Caco-2 (cell line): ENCODE measurements at regions of chr11 and their contacts with region 1.

Region 1: DNA sequence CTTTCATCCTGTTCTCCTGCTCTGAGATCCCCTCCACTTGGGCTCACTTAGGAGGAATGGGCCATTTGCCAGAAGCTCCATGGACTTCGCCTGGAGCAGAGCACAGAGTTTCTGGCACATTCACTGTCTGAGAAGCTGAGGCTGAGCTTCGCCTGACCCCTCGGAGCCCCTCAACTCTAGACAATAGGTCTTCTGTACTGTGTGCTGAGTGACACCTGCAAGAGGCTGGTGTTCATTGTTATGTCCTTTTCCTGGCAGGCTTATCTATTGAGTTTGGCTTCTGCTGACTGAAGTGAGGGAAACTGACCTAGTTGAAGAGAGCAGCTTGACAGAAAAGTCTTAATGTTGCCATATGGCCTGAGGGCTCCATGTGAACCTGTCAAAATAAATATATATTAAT is 124.3 kb downstream of the EHF start:
- DNase-seq: no peak
- H3K4me3 ChIP-seq: no peak overlapping the region
- H3K4me3 Mint-ChIP-seq: no peak overlapping the region
- H3K27ac Mint-ChIP-seq: no peak overlapping the region
- H3K4me1 ChIP-seq: peaks cover 3% of the 10 kb centered on the region; the same call in 1 of the 2 replicates
- H3K4me1 Mint-ChIP-seq: peaks cover 13% of the 10 kb centered on the region
- H3K27me3 ChIP-seq: no peaks in the 10 kb centered on the region
- H3K27me3 Mint-ChIP-seq: no peaks in the 10 kb centered on the region
- CTCF ChIP-seq: no peak

Region 2: GRCh38 chr11:34770171-34770570 is 25.0 kb after region 1 on chr11:
- CTCF ChIA-PET with region 1: no interaction called
- POLR2A ChIA-PET with region 1: no interaction called
- intact Hi-C with region 1: no loop called
- DNase-seq: no peak
- H3K4me3 ChIP-seq: no peak overlapping the region
- H3K4me3 Mint-ChIP-seq: no peak overlapping the region
- H3K27ac Mint-ChIP-seq: no peak overlapping the region
- H3K4me1 ChIP-seq: no peaks in the 10 kb centered on the region
- H3K4me1 Mint-ChIP-seq: no peaks in the 10 kb centered on the region
- H3K27me3 ChIP-seq: no peaks in the 10 kb centered on the region
- H3K27me3 Mint-ChIP-seq: no peaks in the 10 kb centered on the region
- CTCF ChIP-seq: no peak

Region 3: GRCh38 chr11:34825670-34826383 is 80.6 kb after region 1 on chr11:
- CTCF ChIA-PET with region 1: no interaction called
- POLR2A ChIA-PET with region 1: no interaction called
- intact Hi-C with region 1: loop called (anchors 1 kb)
- DNase-seq: peak; percentile 65 to 78
- H3K4me3 ChIP-seq: no peak overlapping the region
- H3K4me3 Mint-ChIP-seq: peak overlapping the region; percentile 33
- H3K27ac Mint-ChIP-seq: peak overlapping the region; percentile 48
- H3K4me1 ChIP-seq: peaks cover 21% of the 10 kb centered on the region
- H3K4me1 Mint-ChIP-seq: peaks cover 15% of the 10 kb centered on the region
- H3K27me3 ChIP-seq: no peaks in the 10 kb centered on the region
- H3K27me3 Mint-ChIP-seq: no peaks in the 10 kb centered on the region
- CTCF ChIP-seq: no peak